Right cardiac atrium (tissue), 5 donors: ENCODE measurements at regions of chr3 and their contacts with region 1.

Region 1: DNA sequence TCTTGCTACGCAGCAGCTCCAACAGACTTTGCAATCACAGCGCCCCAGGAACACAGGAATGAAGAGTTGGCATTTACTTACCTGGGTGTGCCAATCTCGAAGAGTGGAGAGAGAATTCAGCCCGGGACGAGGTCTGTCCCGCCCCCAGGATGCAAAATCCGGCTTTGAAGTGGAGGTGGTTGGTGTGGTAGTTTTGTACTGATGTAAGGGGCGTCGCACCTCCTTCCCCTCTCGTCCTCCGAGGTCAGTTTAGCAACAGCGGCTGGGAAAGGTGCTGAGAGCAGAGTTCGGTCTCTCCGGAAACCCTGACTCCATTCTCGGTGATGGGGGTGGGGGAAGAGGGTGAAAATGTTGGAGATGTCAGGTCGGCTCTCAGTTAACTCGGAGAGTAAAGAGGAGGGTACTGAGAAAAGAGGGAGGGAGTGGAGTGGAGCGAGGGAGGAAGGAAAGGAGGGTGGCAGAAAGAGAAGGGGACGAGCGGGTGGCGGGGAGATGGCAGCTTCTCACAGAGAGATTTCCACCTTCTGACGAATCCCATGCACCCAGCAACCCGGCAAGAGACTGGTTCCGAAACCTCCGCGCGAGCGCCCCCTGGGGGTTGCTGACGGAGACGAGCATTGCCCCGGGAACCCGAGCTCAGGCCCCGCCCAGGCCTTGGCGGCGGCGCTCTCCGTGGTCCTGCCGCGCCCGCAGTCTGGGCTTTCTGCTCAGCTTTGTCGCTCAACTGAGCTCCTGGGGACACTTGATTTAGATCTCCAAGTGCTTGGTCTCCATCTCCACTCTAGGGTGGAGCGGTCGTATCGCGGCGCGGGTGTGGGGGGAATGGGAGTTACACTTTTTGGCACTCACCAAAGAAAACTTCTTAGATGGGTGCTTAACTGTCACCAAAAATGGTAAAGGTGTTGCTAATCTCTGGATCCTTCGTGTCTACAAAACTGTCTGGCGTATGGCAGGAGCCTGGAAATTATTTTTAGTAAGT is at the start of gene CPNE4:
- DNase-seq: peak; percentile 75 to 93 (median 87)
- ATAC-seq: peak; percentile 92 to 97
- H3K4me3 ChIP-seq: peak within 1 kb of the TSS; percentile 21
- H3K27ac ChIP-seq: no peak within 1 kb of the TSS
- H3K4me1 ChIP-seq: no peaks in the 10 kb centered on the region
- H3K27me3 ChIP-seq: peaks cover 2% of the 10 kb centered on the region
- total RNA-seq, gene CPNE4: 0.79 to 9.6 (median 2.3) TPM

Region 2: GRCh38 chr3:131053043-131053859 is 981.5 kb before region 1 on chr3:
- intact Hi-C with region 1: loop called in 1 of 4 experiments (anchors 10 kb)
- DNase-seq: no peak
- ATAC-seq: no peak
- H3K4me3 ChIP-seq: no peak overlapping the region
- H3K27ac ChIP-seq: no peak overlapping the region
- H3K4me1 ChIP-seq: no peaks in the 10 kb centered on the region
- H3K27me3 ChIP-seq: no peaks in the 10 kb centered on the region

Region 3: DNA sequence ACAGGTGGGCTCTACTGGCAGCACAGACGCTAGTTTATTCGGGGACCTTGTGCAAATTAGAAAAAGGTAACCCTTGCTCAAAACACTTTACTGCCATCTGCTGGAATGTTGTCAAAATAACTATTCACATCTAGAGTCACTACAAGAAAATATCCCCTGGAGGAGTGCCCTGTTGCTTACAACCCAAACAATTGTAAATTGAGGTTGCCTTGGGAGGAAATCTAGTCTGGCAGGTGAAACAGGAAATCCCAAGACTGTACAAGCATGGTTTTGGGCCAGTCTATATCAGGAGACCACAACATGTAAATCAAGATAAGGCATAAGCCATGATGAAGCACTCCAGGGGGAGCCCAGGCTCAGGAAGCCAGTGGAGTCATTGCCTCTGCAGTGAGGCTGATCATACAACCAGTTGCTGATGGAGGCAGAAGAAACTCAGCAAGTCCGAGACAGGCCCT is 145.6 kb after region 1 on chr3:
- intact Hi-C with region 1: loop called in 3 of 4 experiments (anchors 5 to 10 kb)
- DNase-seq: no peak
- ATAC-seq: no peak
- H3K4me3 ChIP-seq: no peak overlapping the region
- H3K27ac ChIP-seq: no peak overlapping the region
- H3K4me1 ChIP-seq: no peaks in the 10 kb centered on the region
- H3K27me3 ChIP-seq: no peaks in the 10 kb centered on the region

Region 4: GRCh38 chr3:132311841-132312240 is 277.1 kb after region 1 on chr3:
- intact Hi-C with region 1: no loop called
- DNase-seq: peak in 1 of 3 donors; percentile 39
- ATAC-seq: no peak
- H3K4me3 ChIP-seq: no peak overlapping the region
- H3K27ac ChIP-seq: no peak overlapping the region
- H3K4me1 ChIP-seq: no peaks in the 10 kb centered on the region
- H3K27me3 ChIP-seq: no peaks in the 10 kb centered on the region